K562 (cell line): ENCODE measurements at regions of chrX and their contacts with region 1.

Region 1: GRCh38 chrX:44244008-44244407 is 99.5 kb downstream of the EFHC2 start:
- DNase-seq: peak in 2 of 4 experiments; percentile 13 to 33
- ATAC-seq: peak; percentile 44; the same call in 2 of the 3 replicates
- H3K4me3 ChIP-seq: no peak overlapping the region
- H3K27ac ChIP-seq: no peak overlapping the region
- H3K4me1 ChIP-seq: no peaks in the 10 kb centered on the region
- H3K27me3 ChIP-seq: no peaks in the 10 kb centered on the region
- CTCF ChIP-seq: peak; percentile 43 to 54 (median 45); a peak in 4 of 6 replicates
- EP300 ChIP-seq: no peak
- POLR2A ChIP-seq: no peak
- RAD21 ChIP-seq: peak; percentile 48 to 59

Region 2: GRCh38 chrX:44025555-44025954 is 218.5 kb before region 1 on chrX:
- CTCF ChIA-PET with region 1: no interaction called
- POLR2A ChIA-PET with region 1: no interaction called
- in situ Hi-C with region 1: no loop called
- intact Hi-C with region 1: loop called (anchors 5 kb)
- DNase-seq: no peak
- ATAC-seq: no peak
- H3K4me3 ChIP-seq: no peak overlapping the region
- H3K27ac ChIP-seq: no peak overlapping the region
- H3K4me1 ChIP-seq: peaks cover 0 to 3% of the 10 kb centered on the region in 2 experiments; a peak in 1 of 5 replicates
- H3K27me3 ChIP-seq: peaks cover 3 to 15% of the 10 kb centered on the region in 2 experiments; a peak in 3 of 5 replicates
- CTCF ChIP-seq: no peak
- EP300 ChIP-seq: no peak
- POLR2A ChIP-seq: no peak
- RAD21 ChIP-seq: no peak

Region 3: DNA sequence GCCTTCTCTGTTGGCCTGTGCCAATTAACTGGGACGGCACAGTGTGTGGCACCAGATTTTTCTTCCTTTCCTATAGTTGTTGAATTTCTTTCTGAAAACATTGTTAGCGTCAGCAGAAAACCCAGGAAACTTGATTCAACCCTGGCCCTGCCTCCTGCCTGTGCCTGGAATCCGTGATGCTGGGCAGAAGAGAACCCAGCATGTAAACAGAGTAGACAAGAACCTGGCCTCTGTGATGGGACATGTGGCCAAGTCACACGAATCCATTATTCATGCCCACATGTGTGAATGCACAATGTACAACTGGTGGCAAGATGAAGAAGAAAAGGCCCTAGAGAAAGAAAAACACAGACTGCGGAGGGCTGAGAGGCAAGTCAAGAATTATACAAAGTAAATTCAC is 11.9 kb before region 1 on chrX:
- CTCF ChIA-PET with region 1: no interaction called
- POLR2A ChIA-PET with region 1: no interaction called
- in situ Hi-C with region 1: no loop called
- intact Hi-C with region 1: no loop called
- DNase-seq: no peak
- ATAC-seq: no peak
- H3K4me3 ChIP-seq: no peak overlapping the region
- H3K27ac ChIP-seq: no peak overlapping the region
- H3K4me1 ChIP-seq: no peaks in the 10 kb centered on the region; a peak in 1 of 5 replicates
- H3K27me3 ChIP-seq: no peaks in the 10 kb centered on the region
- CTCF ChIP-seq: no peak
- EP300 ChIP-seq: no peak
- POLR2A ChIP-seq: no peak
- RAD21 ChIP-seq: no peak